ENCODE measurements at regions of chr1 and their contacts with region 1.

Region 1: DNA sequence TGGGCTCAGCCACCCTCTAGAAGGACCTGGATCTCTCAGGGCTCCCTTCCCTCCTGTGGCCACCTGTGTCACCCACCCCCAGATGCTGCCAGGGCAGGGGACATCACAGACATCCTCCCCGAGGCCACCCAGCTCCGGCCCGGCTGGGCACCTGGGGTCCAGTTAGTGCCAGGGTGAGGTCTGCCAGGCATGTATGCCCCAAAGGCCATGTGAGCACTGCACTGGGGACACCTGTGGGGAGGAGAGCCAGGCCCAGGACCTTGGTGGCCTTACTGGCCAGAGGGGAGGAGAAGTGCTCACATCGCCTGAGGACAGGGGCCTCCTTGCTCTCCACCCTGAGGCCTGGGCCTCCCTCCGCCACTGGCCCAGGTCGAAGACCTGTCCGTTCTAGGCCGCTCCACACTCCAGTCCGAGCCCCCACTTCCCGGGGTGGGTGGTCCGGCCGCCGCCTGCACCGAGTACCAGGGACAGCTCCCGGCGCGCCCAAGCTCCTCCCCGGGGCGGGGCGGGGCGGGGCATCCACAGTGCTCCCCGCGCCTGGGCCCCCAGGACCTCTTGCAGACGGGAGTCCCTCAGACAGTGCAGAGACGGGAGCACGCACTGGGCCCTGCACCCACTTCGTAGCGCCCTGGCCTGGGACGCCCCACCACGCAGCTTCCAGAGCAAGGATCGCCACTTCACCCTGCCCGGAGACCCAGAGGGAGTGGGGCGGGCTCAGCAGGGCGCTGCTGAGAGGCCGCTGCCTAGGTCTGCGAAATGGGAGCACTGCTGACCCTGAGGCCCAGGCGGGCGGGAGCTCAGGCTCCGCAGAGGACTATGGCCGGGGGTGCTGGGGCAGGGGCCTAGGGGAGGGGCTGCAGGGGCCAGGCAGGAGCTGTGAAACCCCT is 34.3 kb upstream of the CCDC27 start:
- DNase-seq: no peak
- H3K4me3 ChIP-seq: no peak overlapping the region
- H3K27ac ChIP-seq: no peak overlapping the region
- H3K4me1 ChIP-seq: peaks cover 28% of the 10 kb centered on the region
- H3K27me3 ChIP-seq: no peaks in the 10 kb centered on the region
- CTCF ChIP-seq: no peak
- POLR2A ChIP-seq: no peak

Region 2: GRCh38 chr1:3453203-3453761 is 264.7 kb before region 1 on chr1:
- intact Hi-C with region 1: loop called (anchors 10 kb)
- DNase-seq: no peak
- H3K4me3 ChIP-seq: no peak overlapping the region
- H3K27ac ChIP-seq: no peak overlapping the region
- H3K4me1 ChIP-seq: peaks cover 34% of the 10 kb centered on the region
- H3K27me3 ChIP-seq: no peaks in the 10 kb centered on the region
- CTCF ChIP-seq: peak; percentile 68 to 74 (median 73)
- POLR2A ChIP-seq: no peak